ENCODE measurements at regions of chr10 and their contacts with region 1.

Region 1: GRCh38 chr10:70404036-70404786 is at the start of gene EIF4EBP2:
- DNase-seq: peak; percentile 93
- ATAC-seq: peak; percentile 86
- H3K4me3 ChIP-seq: peak within 1 kb of the TSS; percentile 81
- H3K27ac ChIP-seq: peak within 1 kb of the TSS; percentile 73
- H3K4me1 ChIP-seq: no peaks in the 10 kb centered on the region
- H3K27me3 ChIP-seq: no peaks in the 10 kb centered on the region
- CTCF ChIP-seq: no peak
- POLR2A ChIP-seq: peak; percentile 91
- RAD21 ChIP-seq: no peak
- total RNA-seq, gene EIF4EBP2: 15.6 and 20.8 TPM in 2 replicates

Region 2: DNA sequence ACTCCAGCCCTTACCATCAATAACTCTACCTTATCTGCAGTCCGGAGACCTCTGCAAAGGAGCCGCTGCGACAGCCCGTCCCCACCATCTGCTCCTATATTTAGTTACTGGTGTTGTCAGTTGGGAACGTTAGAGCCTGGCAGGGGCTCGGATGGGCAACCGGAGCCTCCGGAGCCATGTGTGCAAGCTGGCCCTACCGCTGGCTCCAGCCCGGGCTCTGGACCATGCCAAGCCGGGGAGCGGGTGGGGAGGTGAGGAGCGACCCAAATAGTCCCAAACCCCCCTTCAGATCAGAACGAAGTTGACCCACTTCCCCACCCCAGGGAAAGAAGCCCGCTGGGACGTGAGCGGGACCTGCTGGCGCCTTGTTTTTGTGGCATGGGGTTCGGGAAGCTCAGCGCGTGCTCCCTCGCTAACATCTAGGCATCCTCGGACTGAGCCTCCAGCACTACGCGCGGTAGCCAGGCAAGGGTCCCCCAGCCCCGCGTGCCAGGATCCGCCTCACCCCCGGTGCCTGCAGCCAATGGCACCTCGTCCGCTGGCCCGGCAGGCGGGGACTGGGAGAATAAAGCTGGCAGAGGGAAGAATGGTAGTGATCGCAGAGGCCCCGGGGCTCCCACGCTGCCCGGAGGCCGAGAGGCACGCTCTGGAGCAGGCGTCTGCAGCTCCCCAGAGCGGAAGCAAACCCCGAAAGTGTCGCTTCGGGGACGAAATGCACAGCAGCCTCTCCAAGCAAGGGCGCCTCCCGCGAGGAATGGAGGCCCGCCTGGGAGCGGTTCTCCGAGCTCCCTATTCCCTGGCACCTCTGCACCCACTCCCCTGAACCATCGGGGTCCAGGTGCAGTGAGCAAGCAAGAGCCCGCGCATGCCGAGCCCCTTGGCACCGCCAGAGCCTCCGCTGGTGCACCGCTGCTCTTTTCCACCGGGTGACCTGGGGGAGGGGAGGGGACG is 22.5 kb before region 1 on chr10:
- CTCF ChIA-PET with region 1: no interaction called
- POLR2A ChIA-PET with region 1: no interaction called
- dilution Hi-C with region 1: no loop called
- in situ Hi-C with region 1: no loop called
- intact Hi-C with region 1: loop called (anchors 1 kb)
- DNase-seq: peak; percentile 13
- ATAC-seq: peak; percentile 22
- H3K4me3 ChIP-seq: peak overlapping the region; percentile 77
- H3K27ac ChIP-seq: peak overlapping the region; percentile 52
- H3K4me1 ChIP-seq: peaks cover 14% of the 10 kb centered on the region
- H3K27me3 ChIP-seq: no peaks in the 10 kb centered on the region
- CTCF ChIP-seq: no peak
- POLR2A ChIP-seq: no peak
- RAD21 ChIP-seq: no peak

Region 3: GRCh38 chr10:70549962-70550458 is 145.8 kb after region 1 on chr10:
- CTCF ChIA-PET with region 1: no interaction called
- POLR2A ChIA-PET with region 1: no interaction called
- dilution Hi-C with region 1: no loop called
- in situ Hi-C with region 1: no loop called
- intact Hi-C with region 1: no loop called
- DNase-seq: peak; percentile 48
- ATAC-seq: peak; percentile 73
- H3K4me3 ChIP-seq: no peak overlapping the region
- H3K27ac ChIP-seq: no peak overlapping the region
- H3K4me1 ChIP-seq: peaks cover 9% of the 10 kb centered on the region
- H3K27me3 ChIP-seq: peaks cover 3% of the 10 kb centered on the region; the same call in 1 of the 2 replicates
- CTCF ChIP-seq: peak; percentile 80
- POLR2A ChIP-seq: no peak
- RAD21 ChIP-seq: peak; percentile 92

Measured in IMR-90 (cell line).